Thyroid gland (tissue), 4 donors: ENCODE measurements at regions of chr11 and their contacts with region 1.

Region 1: DNA sequence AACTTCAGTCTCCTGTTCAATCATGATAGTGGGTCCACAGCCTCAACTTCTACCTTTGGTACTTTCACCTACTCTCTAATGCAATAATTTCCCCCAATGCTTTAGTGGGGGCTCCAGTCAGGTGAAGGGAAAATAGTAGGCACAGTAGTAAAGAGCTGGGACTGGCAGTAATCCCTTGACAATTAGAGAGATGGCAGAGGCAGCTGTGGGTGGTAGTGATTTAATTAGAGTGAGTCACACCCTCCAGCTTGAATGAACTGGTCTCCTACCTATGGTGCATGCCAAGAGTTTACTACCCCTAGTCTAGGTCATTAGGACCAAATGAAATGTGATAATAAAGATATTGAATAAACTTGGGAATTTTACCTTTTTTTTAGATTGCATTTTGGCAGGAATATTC is 8.8 kb downstream of the PRRG4 start:
- DNase-seq: no peak
- H3K4me3 ChIP-seq: no peak overlapping the region
- H3K27ac ChIP-seq: no peak overlapping the region
- H3K4me1 ChIP-seq: no peaks in the 10 kb centered on the region
- H3K27me3 ChIP-seq: no peaks in the 10 kb centered on the region
- CTCF ChIP-seq: no peak
- POLR2A ChIP-seq: no peak

Region 2: DNA sequence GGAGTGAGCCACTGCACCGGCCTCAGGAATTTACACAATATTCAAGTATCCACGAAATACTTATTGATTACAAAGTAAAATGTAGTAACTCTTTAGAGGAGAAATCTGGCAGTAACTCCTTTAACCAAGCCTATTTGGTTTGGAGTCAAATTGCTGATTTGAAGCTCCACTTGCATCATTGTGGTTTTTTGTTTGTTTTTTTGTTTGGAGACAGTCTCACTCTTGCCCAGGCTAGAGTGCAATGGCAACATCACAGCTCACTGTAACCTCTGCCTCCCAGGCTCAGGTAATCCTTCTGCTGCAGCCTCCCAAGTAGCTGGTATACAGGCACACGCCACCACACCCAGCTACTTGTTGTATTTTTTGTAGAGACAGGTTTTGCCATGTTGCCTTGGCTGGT is 47.7 kb after region 1 on chr11:
- intact Hi-C with region 1: loop called (anchors 2 kb)
- DNase-seq: no peak
- H3K4me3 ChIP-seq: no peak overlapping the region
- H3K27ac ChIP-seq: no peak overlapping the region
- H3K4me1 ChIP-seq: no peaks in the 10 kb centered on the region
- H3K27me3 ChIP-seq: no peaks in the 10 kb centered on the region
- CTCF ChIP-seq: no peak
- POLR2A ChIP-seq: no peak

Region 3: DNA sequence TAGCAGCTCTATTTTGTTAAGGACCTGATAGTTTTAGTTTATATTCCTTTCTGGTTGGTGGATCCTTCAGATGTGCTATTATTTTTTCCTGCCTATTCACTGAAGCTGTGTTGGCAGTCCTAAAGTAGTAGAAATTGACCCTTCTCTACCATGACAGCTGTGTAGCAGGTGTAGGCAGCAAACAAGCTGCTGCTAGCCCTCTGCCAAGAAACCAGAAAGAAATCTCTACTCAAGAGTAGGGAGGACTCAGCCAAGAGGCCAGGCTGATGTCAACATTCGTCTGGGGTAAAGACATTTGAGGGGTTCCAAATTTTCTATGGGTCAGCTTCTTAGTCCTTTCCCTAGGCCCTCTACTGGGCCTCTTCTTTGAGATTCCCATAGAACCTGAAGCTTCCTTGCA is 271.6 kb after region 1 on chr11:
- intact Hi-C with region 1: no loop called
- DNase-seq: no peak
- H3K4me3 ChIP-seq: no peak overlapping the region
- H3K27ac ChIP-seq: no peak overlapping the region
- H3K4me1 ChIP-seq: peaks cover 0 to 4% of the 10 kb centered on the region in 2 donors
- H3K27me3 ChIP-seq: no peaks in the 10 kb centered on the region
- CTCF ChIP-seq: no peak
- POLR2A ChIP-seq: no peak